ENCODE measurements at regions of chr14 and their contacts with region 1.

Region 1: GRCh38 chr14:64303471-64303917 is 9.3 kb upstream of the ESR2 start:
- DNase-seq: peak; percentile 32
- ATAC-seq: peak; percentile 87
- H3K4me3 ChIP-seq: no peak overlapping the region
- H3K27ac ChIP-seq: no peak overlapping the region
- H3K4me1 ChIP-seq: no peaks in the 10 kb centered on the region
- H3K27me3 ChIP-seq: no peaks in the 10 kb centered on the region
- CTCF ChIP-seq: peak; percentile 77

Region 2: DNA sequence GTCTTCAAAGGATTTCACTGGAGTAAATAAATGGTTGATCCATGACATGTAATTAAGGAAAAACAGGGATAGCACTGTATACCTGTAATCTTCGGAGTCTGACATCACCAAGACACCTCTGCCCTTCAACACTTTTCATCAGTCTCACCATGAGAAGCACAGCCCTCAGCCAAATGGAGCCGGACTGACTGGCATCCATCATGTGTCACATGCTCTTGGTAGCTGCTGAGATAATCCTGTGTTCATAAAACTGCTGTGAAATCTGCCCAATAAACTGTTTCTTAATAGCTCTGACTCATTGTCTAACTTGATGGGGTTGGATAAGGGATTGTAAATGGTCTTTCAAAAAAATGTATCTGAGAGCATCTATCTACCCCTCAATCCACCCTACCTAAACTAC is 1291.9 kb before region 1 on chr14:
- CTCF ChIA-PET with region 1: no interaction called
- POLR2A ChIA-PET with region 1: no interaction called
- in situ Hi-C with region 1: no loop called
- intact Hi-C with region 1: no loop called
- DNase-seq: no peak
- ATAC-seq: no peak
- H3K4me3 ChIP-seq: no peak overlapping the region
- H3K27ac ChIP-seq: no peak overlapping the region
- H3K4me1 ChIP-seq: no peaks in the 10 kb centered on the region
- H3K27me3 ChIP-seq: no peaks in the 10 kb centered on the region
- CTCF ChIP-seq: no peak

Region 3: DNA sequence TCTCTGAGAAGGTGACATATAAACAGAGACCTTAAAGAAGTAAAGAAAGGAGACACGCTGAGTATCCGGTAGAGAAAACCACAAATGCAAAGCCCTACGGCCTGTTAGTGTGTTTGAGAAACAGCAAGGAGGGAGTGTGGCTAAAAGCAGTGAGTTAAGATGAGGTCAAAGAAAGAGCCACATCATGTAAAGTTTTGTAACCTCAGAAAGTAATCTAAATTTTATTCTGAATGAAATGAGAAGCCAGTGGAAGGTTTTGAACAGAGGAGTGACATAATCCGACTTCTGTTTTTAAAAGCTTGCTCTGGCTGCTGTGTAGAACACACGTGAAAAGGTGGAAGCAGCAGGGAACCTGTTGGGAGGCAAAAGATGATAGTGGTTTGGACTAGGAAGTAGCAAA is 793.0 kb before region 1 on chr14:
- CTCF ChIA-PET with region 1: no interaction called
- POLR2A ChIA-PET with region 1: no interaction called
- in situ Hi-C with region 1: no loop called
- intact Hi-C with region 1: no loop called
- DNase-seq: no peak
- ATAC-seq: no peak
- H3K4me3 ChIP-seq: no peak overlapping the region
- H3K27ac ChIP-seq: no peak overlapping the region
- H3K4me1 ChIP-seq: peaks cover 3% of the 10 kb centered on the region
- H3K27me3 ChIP-seq: no peaks in the 10 kb centered on the region
- CTCF ChIP-seq: no peak

Region 4: GRCh38 chr14:63800651-63801375 is 502.7 kb before region 1 on chr14:
- CTCF ChIA-PET with region 1: no interaction called
- POLR2A ChIA-PET with region 1: no interaction called
- in situ Hi-C with region 1: no loop called
- intact Hi-C with region 1: loop called (anchors 1 kb)
- DNase-seq: no peak
- ATAC-seq: no peak
- H3K4me3 ChIP-seq: no peak overlapping the region
- H3K27ac ChIP-seq: no peak overlapping the region
- H3K4me1 ChIP-seq: peaks cover 4% of the 10 kb centered on the region
- H3K27me3 ChIP-seq: no peaks in the 10 kb centered on the region
- CTCF ChIP-seq: no peak

Region 5: DNA sequence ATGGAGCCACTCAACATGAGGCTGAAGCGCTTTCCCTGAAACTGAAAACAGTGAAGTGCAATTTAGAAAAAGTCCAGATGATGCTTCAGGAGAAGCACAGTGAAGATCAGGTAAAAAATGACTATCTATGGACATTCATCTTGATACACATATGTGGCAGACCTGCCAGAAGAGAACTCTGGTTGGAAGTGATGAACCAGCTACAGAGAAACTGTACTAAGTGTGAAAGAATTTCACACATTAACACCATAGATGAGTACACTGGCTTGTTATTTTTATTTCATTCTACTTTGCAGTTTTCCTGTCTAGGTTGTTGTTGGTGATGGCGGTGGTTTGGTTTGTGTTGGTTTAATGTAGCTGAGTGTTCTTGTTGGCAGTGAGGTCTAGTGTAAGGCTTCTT is 184.0 kb before region 1 on chr14:
- CTCF ChIA-PET with region 1: interaction called, 10 read pairs
- POLR2A ChIA-PET with region 1: no interaction called
- in situ Hi-C with region 1: no loop called
- intact Hi-C with region 1: no loop called
- DNase-seq: no peak
- ATAC-seq: no peak
- H3K4me3 ChIP-seq: no peak overlapping the region
- H3K27ac ChIP-seq: no peak overlapping the region
- H3K4me1 ChIP-seq: no peaks in the 10 kb centered on the region
- H3K27me3 ChIP-seq: no peaks in the 10 kb centered on the region
- CTCF ChIP-seq: no peak

Measured in Panc1 (cell line).